H1 (cell line): ENCODE measurements at regions of chr15 and their contacts with region 1.

Region 1: GRCh38 chr15:77584201-77584600 is 48.5 kb downstream of the LINGO1 start:
- DNase-seq: no peak
- H3K4me3 ChIP-seq: no peak overlapping the region
- H3K27ac ChIP-seq: no peak overlapping the region
- H3K4me1 ChIP-seq: no peaks in the 10 kb centered on the region; a peak in 2 of 7 replicates
- H3K27me3 ChIP-seq: no peaks in the 10 kb centered on the region; a peak in 1 of 7 replicates
- CTCF ChIP-seq: peak; percentile 61 to 73 (median 69)
- EP300 ChIP-seq: no peak
- POLR2A ChIP-seq: no peak
- RAD21 ChIP-seq: peak; percentile 58 to 66

Region 2: DNA sequence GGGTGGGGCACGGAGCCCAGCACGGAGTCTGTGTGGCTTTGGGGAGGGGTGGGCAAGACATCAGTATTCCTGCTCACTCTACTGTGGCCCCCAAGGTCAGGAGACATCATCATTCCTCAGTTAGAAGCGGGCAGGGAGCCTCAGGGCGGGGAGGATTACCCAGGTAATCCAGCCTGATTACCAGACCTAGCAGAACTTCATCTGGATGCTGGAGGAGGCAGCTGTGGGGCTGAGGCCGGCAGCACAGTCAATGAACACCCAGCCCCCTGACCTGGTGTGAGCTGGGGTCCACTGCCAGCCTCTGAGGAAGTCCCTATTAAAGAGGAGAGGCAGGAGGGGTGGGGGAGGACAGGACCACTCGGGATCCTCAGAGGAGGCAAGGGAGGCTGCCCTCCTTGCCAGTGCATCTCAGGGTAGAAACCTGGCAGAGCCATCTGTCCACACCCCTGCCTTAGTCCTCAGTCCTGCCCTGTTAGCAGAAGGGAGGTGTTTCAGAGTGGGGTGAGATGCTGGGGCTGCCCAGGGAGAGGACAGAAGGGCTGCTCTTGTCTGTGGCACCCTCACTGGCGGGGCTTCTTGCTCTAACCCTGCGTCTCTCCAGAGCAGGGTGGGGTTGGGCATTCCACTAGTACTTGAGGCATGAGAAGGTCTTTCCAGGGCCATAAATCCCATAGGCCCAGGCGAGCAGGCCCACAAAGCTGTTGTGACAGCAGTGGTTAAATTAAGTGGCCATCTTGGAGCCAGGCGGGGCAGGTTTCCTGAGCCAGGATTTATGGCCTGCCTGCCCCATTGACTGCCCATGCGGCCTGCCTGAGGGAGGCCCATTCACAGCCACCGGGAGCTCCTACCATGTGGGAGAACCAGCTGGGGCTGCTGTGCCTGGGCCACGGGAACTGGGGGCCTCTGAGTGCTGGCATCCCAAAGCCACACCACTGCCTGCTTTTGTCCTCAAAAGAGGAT is 33.6 kb before region 1 on chr15:
- CTCF ChIA-PET with region 1: interaction called, 10 read pairs
- POLR2A ChIA-PET with region 1: no interaction called
- DNase-seq: no peak
- H3K4me3 ChIP-seq: no peak overlapping the region
- H3K27ac ChIP-seq: no peak overlapping the region
- H3K4me1 ChIP-seq: peaks cover 0 to 10% (median 5%) of the 10 kb centered on the region in 4 experiments; a peak in 5 of 7 replicates
- H3K27me3 ChIP-seq: no peaks in the 10 kb centered on the region
- CTCF ChIP-seq: no peak
- EP300 ChIP-seq: no peak
- POLR2A ChIP-seq: no peak
- RAD21 ChIP-seq: no peak

Region 3: DNA sequence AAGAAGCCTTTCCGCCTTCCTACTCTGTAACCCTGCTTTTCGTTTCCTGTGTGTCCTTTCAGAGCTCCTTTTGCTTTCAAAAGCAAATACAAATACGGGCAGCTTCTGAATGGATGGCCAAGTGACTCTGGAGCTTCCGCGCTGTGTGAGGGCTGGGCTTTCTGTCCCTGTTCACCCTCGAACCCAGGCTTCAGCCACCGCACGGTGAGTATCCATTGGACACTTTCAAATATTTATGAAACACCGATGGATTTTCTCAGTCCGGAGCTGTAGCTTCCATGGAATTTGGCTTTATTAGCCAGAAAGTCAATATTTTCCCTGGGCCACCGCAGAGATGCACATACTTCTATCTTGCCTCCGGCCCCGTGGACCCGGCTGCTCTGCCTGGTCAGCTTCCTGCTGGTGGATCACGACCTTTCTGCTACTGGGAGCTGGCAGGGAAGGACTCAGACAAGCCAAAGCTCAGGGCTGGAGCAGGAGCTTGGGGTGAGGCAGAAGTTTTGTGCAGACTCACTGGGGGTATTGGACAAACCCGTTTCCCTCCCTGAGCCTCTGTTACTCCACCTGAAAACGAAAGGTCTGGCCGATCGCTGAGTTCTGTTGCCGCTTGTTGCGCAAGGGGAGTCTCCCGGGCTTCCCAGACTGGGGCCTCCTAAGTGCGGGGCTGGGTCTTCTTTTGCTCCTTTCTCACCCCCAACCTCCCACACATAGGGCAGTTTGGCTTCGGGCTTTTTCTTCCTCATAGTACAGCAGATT is 15.1 kb before region 1 on chr15:
- CTCF ChIA-PET with region 1: interaction called, 74 read pairs
- POLR2A ChIA-PET with region 1: no interaction called
- DNase-seq: no peak
- H3K4me3 ChIP-seq: no peak overlapping the region
- H3K27ac ChIP-seq: no peak overlapping the region
- H3K4me1 ChIP-seq: peaks cover 0 to 17% (median 11%) of the 10 kb centered on the region in 4 experiments; a peak in 6 of 7 replicates
- H3K27me3 ChIP-seq: no peaks in the 10 kb centered on the region
- CTCF ChIP-seq: no peak
- EP300 ChIP-seq: no peak
- POLR2A ChIP-seq: no peak
- RAD21 ChIP-seq: no peak

Region 4: GRCh38 chr15:77607111-77607893 is 23.1 kb after region 1 on chr15:
- CTCF ChIA-PET with region 1: interaction called, 11 read pairs
- POLR2A ChIA-PET with region 1: interaction called, 5 read pairs
- DNase-seq: no peak
- H3K4me3 ChIP-seq: no peak overlapping the region
- H3K27ac ChIP-seq: no peak overlapping the region
- H3K4me1 ChIP-seq: peaks cover 4 to 41% (median 22%) of the 10 kb centered on the region in 4 experiments
- H3K27me3 ChIP-seq: no peaks in the 10 kb centered on the region
- CTCF ChIP-seq: no peak
- EP300 ChIP-seq: no peak
- POLR2A ChIP-seq: no peak
- RAD21 ChIP-seq: no peak